T-cell (primary cell): ENCODE measurements at regions of chr17 and their contacts with region 1.

Region 1: GRCh38 chr17:75059369-75060345 is 12.6 kb downstream of the KCTD2 start:
- DNase-seq: peak in 2 of 35 experiments; percentile 17 to 51
- ATAC-seq: peak; percentile 70 to 92 (median 74)
- H3K4me3 ChIP-seq: no peak overlapping the region
- H3K4me3 Mint-ChIP-seq: no peak overlapping the region
- H3K27ac ChIP-seq: no peak overlapping the region
- H3K27ac Mint-ChIP-seq: peak overlapping the region; percentile 46 to 61
- H3K4me1 ChIP-seq: no peaks in the 10 kb centered on the region
- H3K4me1 Mint-ChIP-seq: peaks cover 10 to 18% (median 12%) of the 10 kb centered on the region in 3 donors
- H3K27me3 ChIP-seq: no peaks in the 10 kb centered on the region
- H3K27me3 Mint-ChIP-seq: no peaks in the 10 kb centered on the region

Region 2: GRCh38 chr17:74224959-74225725 is 834.5 kb before region 1 on chr17:
- CTCF ChIA-PET with region 1: no interaction called
- POLR2A ChIA-PET with region 1: no interaction called
- DNase-seq: no peak
- ATAC-seq: no peak
- H3K4me3 ChIP-seq: no peak overlapping the region
- H3K4me3 Mint-ChIP-seq: no peak overlapping the region
- H3K27ac ChIP-seq: no peak overlapping the region
- H3K27ac Mint-ChIP-seq: no peak overlapping the region
- H3K4me1 ChIP-seq: no peaks in the 10 kb centered on the region
- H3K4me1 Mint-ChIP-seq: no peaks in the 10 kb centered on the region
- H3K27me3 ChIP-seq: no peaks in the 10 kb centered on the region
- H3K27me3 Mint-ChIP-seq: no peaks in the 10 kb centered on the region

Region 3: GRCh38 chr17:74950207-74950606 is 109.5 kb before region 1 on chr17:
- CTCF ChIA-PET with region 1: no interaction called
- POLR2A ChIA-PET with region 1: no interaction called
- DNase-seq: no peak
- ATAC-seq: no peak
- H3K4me3 ChIP-seq: no peak overlapping the region
- H3K4me3 Mint-ChIP-seq: no peak overlapping the region
- H3K27ac ChIP-seq: no peak overlapping the region
- H3K27ac Mint-ChIP-seq: no peak overlapping the region
- H3K4me1 ChIP-seq: no peaks in the 10 kb centered on the region
- H3K4me1 Mint-ChIP-seq: no peaks in the 10 kb centered on the region
- H3K27me3 ChIP-seq: peaks cover under 1 to 52% of the 10 kb centered on the region in 2 experiments
- H3K27me3 Mint-ChIP-seq: peaks cover 2 to 3% of the 10 kb centered on the region in 2 donors

Region 4: DNA sequence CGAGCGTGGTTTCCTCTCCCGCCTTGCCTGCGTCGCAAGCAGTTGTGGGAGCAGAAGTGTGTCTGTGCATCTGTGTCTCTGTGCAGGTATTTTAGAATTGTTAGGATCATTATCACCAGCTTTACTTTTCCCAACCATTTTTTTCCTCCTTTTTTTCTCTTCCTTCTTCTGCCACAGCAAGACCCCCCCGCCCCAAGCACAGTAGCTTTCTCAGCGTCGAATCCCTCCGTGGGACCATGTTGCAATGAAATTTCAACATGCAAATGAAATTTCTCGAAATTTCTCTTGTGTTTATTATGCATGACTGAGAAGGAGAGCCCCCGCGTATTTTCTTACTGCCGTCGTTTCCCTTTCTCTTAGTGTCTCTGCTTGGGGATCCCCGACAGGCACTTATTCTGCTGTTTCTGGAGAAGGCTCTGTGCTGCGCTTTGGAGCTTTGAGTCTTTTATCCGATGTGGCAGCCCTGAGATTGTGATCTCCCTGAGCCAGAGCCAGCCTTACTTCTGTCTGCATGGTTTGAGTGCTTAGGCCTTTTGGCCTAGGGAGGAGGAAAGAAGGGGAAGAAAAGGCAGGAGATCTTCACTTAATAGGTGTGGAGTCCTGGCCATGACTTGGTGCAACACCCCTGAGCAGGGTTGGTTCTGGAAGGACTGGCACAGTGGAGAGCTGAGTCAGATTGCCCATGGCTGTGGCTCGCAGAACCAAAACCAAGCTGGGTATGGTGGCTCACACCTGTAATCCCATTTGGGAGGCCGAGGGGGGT is 55.1 kb after region 1 on chr17:
- CTCF ChIA-PET with region 1: interaction called, 10 to 11 read pairs
- POLR2A ChIA-PET with region 1: interaction called in 1 of 2 experiments, 9 read pairs
- DNase-seq: peak in 1 of 35 experiments; percentile 10
- ATAC-seq: no peak
- H3K4me3 ChIP-seq: peak overlapping the region; percentile 65 to 78
- H3K4me3 Mint-ChIP-seq: peak overlapping the region; percentile 80 to 88 (median 87)
- H3K27ac ChIP-seq: peak overlapping the region; percentile 72
- H3K27ac Mint-ChIP-seq: peak overlapping the region; percentile 89 to 95
- H3K4me1 ChIP-seq: peaks cover 10 to 43% of the 10 kb centered on the region in 2 experiments
- H3K4me1 Mint-ChIP-seq: peaks cover 37 to 49% (median 43%) of the 10 kb centered on the region in 3 donors
- H3K27me3 ChIP-seq: no peaks in the 10 kb centered on the region
- H3K27me3 Mint-ChIP-seq: no peaks in the 10 kb centered on the region